ENCODE measurements at regions of chr12 and their contacts with region 1.

Region 1: DNA sequence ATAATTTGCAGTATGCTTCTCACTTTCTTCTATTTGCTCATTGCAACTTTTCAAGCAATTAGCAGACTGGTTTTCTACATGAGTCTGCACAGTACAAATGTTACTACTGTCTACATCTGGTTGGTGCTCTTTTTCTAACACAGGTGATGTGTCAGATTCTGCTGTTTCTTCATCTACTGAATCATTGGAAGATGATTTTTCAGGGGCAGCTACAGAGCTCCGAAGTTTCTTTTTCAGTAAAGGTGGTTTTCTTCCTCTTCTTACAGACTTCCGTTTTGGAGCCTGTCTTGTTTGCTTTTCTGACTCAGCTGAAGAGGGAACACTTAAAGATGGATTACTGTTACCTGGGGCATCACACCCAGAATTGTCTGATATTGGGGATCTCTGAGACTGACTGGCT is 62.1 kb downstream of the SCAF11 start:
- DNase-seq: no peak
- H3K4me3 ChIP-seq: no peak overlapping the region
- H3K27ac ChIP-seq: no peak overlapping the region
- H3K4me1 ChIP-seq: no peaks in the 10 kb centered on the region
- H3K27me3 ChIP-seq: no peaks in the 10 kb centered on the region
- CTCF ChIP-seq: no peak
- POLR2A ChIP-seq: no peak

Region 2: GRCh38 chr12:45914090-45914489 is 14.2 kb before region 1 on chr12:
- CTCF ChIA-PET with region 1: interaction called, 3 read pairs
- POLR2A ChIA-PET with region 1: interaction called, 10 read pairs
- dilution Hi-C with region 1: no loop called
- intact Hi-C with region 1: no loop called
- DNase-seq: no peak
- H3K4me3 ChIP-seq: no peak overlapping the region
- H3K27ac ChIP-seq: no peak overlapping the region
- H3K4me1 ChIP-seq: no peaks in the 10 kb centered on the region
- H3K27me3 ChIP-seq: no peaks in the 10 kb centered on the region
- CTCF ChIP-seq: no peak
- POLR2A ChIP-seq: no peak

Region 3: DNA sequence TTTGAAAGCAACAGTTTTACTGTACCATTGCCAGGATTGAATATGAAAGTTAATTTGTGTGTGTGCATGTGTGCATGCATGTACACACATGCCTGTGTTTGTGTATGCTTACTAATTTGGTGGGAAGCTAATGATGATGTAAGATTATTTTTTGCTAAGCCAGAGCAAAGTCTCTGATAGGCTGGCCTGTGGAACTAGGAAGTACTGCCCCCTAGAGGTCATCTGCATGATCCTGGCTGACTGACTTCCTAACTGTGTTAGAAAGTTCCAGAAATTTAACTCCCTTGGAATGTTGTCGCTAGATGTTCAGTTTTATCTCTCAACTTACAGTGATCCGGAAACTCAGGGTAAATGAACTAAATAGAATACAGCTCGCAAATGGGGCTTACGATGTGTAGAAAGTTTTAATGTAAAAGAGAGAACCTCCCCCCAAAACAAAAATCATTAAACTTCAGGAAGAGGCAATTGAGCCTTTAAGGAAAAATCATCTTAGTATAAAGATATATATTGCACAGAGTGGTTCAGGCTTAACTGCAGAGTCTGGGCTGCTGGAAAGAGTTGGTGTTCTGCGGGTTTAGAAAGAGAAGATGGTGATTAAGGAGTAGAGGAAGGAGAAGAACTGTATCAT is 374.8 kb after region 1 on chr12:
- CTCF ChIA-PET with region 1: no interaction called
- POLR2A ChIA-PET with region 1: no interaction called
- dilution Hi-C with region 1: no loop called
- intact Hi-C with region 1: no loop called
- DNase-seq: peak; percentile 35
- H3K4me3 ChIP-seq: no peak overlapping the region
- H3K27ac ChIP-seq: no peak overlapping the region
- H3K4me1 ChIP-seq: no peaks in the 10 kb centered on the region
- H3K27me3 ChIP-seq: peaks cover 3 to 12% of the 10 kb centered on the region in 2 experiments
- CTCF ChIP-seq: peak; percentile 54 to 58
- POLR2A ChIP-seq: no peak